Activated CD4-positive, alpha-beta memory T cell treated with anti-CD3 and anti-CD28 coated beads for 36 hours (primary cell): ENCODE measurements at regions of chr11 and their contacts with region 1.

Region 1: DNA sequence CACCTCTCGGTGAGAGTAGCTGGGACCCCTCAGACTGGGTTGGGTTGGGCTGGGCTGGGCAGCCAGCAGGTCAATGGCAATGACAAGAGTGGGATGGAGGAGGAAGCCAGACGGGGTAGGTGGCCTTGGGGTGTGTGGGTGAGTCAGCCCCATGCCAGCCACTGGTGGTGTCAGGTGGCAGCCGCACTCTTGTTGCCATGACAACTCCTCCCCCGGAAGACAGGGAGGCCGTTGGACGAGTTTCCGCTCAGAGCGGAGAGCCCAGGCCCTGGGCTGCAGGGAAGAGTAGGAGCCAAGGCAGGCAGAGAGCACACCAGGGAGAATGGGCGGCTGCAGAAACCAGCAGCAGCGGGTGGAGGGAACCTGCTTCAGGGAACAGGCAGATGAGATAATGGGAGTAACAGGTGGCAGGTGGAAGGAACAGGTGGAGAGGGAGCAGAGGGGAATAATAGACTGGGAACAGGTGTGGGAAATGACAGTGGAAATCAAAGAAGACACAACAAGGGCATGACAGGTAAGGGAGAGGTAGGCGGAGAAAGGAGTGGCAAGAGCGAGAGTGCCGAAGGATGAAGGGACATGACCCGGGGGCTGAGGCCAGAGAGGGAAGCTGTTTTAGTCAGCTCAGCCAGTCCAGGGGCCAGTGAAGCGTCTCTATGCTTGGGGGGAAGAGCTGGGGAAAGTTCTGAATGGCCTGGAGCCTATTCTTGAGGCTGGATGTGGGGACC is 8.6 kb downstream of the SPTBN2 start:
- DNase-seq: peak; percentile 77
- H3K4me3 Mint-ChIP-seq: no peak overlapping the region
- H3K27ac Mint-ChIP-seq: no peak overlapping the region
- H3K4me1 Mint-ChIP-seq: peaks cover 8% of the 10 kb centered on the region
- H3K27me3 Mint-ChIP-seq: peaks cover 33% of the 10 kb centered on the region

Region 2: DNA sequence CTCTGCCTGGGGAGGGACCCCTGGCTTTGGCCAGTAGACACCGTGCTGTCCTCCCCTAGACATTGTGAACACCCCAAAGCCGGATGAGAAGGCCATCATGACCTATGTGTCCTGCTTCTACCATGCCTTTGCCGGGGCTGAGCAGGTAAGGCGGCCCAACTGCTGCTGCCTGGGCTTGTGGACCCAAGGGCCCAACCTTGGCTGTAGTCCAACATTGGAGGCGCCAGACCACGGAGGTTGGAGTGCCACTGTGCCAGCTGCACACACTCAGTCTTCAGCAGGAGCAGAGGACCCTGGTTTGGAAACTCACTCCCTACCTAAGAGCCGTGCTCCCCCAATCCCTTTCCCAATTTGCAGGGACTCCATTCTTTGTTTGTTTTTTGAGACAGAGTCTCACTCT is 164.3 kb before region 1 on chr11:
- CTCF ChIA-PET with region 1: no interaction called
- POLR2A ChIA-PET with region 1: no interaction called
- intact Hi-C with region 1: no loop called
- DNase-seq: no peak
- H3K4me3 Mint-ChIP-seq: no peak overlapping the region
- H3K27ac Mint-ChIP-seq: no peak overlapping the region
- H3K4me1 Mint-ChIP-seq: no peaks in the 10 kb centered on the region
- H3K27me3 Mint-ChIP-seq: peaks cover 8% of the 10 kb centered on the region

Region 3: DNA sequence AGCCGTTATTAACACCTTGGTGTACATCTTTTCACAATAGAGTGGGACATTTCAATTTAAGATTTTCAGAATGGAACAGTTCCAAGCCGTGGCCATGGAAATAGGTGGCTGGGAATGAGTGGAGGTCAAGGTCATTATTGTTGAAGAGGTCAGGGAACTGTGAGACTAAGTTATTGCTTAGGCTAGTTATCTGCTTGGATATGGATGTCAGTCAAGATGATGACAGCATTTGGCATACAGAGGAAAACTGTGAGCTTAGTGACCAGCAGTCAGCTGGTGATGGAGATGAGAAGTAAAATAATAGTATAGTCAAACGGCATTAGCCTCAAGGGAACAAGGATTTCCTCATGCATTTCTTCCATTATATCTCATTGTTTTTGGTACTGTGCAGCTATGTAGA is 70.3 kb after region 1 on chr11:
- CTCF ChIA-PET with region 1: no interaction called
- POLR2A ChIA-PET with region 1: no interaction called
- intact Hi-C with region 1: loop called (anchors 10 kb)
- DNase-seq: no peak
- H3K4me3 Mint-ChIP-seq: no peak overlapping the region
- H3K27ac Mint-ChIP-seq: no peak overlapping the region
- H3K4me1 Mint-ChIP-seq: no peaks in the 10 kb centered on the region
- H3K27me3 Mint-ChIP-seq: no peaks in the 10 kb centered on the region